ENCODE measurements at regions of chr2 and their contacts with region 1.

Region 1: DNA sequence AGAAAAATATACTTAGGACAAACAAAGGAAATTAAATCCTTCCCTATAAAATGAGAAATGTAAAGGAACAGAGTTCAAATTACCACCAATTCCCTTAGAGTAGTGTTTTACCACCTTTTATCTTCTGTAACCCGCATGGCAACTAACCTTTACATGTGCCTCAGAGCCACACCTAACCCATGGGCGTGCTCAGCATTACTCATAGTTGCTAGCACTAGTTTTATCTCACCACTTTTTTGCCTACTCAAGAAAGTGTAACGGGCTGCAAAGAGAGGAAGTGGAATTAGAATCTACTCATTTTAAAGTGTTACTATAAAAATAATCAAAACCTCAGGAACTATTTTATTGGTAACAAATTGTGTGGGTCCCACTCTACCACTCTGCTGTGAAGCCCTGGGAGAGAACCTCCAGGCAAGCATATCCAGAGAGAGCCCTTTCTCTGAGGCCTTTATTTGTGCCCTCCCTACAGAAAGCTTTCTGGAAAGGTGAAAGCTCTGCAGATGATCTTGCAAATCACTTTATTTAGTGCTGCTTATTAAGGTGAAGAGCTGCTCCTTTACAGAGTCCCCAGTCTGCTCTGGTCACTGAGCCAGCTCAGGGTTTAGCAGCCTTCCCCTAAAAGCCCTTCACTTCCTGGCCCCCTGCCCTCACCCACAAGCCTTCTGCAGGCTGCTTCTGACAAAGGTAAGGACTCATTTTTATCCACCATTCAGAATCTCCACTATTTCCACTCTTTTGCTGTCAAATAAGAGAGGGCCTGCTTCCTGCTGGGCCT is 98.8 kb downstream of the TRABD2A start:
- DNase-seq: peak; percentile 78
- H3K4me3 Mint-ChIP-seq: no peak overlapping the region
- H3K27ac Mint-ChIP-seq: peak overlapping the region; percentile 83
- H3K4me1 Mint-ChIP-seq: peaks cover 68% of the 10 kb centered on the region
- H3K27me3 Mint-ChIP-seq: no peaks in the 10 kb centered on the region

Region 2: GRCh38 chr2:84459018-84459943 is 322.8 kb before region 1 on chr2 and contains the start of gene SUCLG1:
- CTCF ChIA-PET with region 1: no interaction called
- intact Hi-C with region 1: loop called (anchors 2 kb)
- DNase-seq: peak; percentile 89
- H3K4me3 Mint-ChIP-seq: peak within 1 kb of the TSS; percentile 86
- H3K27ac Mint-ChIP-seq: peak within 1 kb of the TSS; percentile 92
- H3K4me1 Mint-ChIP-seq: peaks cover 40% of the 10 kb centered on the region
- H3K27me3 Mint-ChIP-seq: no peaks in the 10 kb centered on the region
- total RNA-seq, gene SUCLG1: 75.3 to 80.7 TPM

Region 3: DNA sequence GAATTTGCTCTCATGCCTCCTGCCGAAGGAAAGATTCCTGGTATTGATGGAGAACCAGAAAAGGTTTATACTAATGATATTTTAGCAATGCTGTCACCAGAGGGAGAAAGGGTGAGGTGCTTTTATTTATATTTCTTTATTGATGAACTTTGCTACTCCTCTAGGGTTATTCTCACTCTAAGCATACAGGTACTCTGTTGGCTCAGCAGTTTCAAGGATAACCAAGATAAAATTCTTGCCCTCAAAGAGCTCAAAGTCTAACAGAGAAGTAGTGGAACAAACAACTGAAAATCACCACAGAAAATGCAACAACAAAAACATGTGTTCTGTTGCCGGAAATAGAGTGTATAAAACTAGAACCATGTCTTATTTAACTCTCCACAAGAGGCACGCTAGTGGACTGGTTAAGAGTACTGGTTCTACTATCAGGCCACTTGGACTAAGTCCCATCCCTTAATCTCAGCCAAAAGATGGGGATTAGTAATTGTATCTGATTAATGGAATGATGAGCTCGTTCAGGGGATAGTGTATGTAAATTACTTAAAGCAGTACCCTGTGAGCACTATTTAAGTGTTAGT is 162.2 kb before region 1 on chr2:
- CTCF ChIA-PET with region 1: no interaction called
- intact Hi-C with region 1: no loop called
- DNase-seq: no peak
- H3K4me3 Mint-ChIP-seq: no peak overlapping the region
- H3K27ac Mint-ChIP-seq: no peak overlapping the region
- H3K4me1 Mint-ChIP-seq: peaks cover 3% of the 10 kb centered on the region
- H3K27me3 Mint-ChIP-seq: no peaks in the 10 kb centered on the region

Region 4: GRCh38 chr2:84649487-84650142 is 132.5 kb before region 1 on chr2:
- CTCF ChIA-PET with region 1: interaction called, 3 read pairs
- intact Hi-C with region 1: loop called (anchors 2 kb)
- DNase-seq: no peak
- H3K4me3 Mint-ChIP-seq: peak overlapping the region; percentile 0
- H3K27ac Mint-ChIP-seq: peak overlapping the region; percentile 60
- H3K4me1 Mint-ChIP-seq: peaks cover 75% of the 10 kb centered on the region
- H3K27me3 Mint-ChIP-seq: no peaks in the 10 kb centered on the region

Region 5: GRCh38 chr2:84669122-84669521 is 113.0 kb before region 1 on chr2:
- CTCF ChIA-PET with region 1: no interaction called
- intact Hi-C with region 1: no loop called
- DNase-seq: no peak
- H3K4me3 Mint-ChIP-seq: no peak overlapping the region
- H3K27ac Mint-ChIP-seq: no peak overlapping the region
- H3K4me1 Mint-ChIP-seq: peaks cover 5% of the 10 kb centered on the region
- H3K27me3 Mint-ChIP-seq: no peaks in the 10 kb centered on the region

Region 6: DNA sequence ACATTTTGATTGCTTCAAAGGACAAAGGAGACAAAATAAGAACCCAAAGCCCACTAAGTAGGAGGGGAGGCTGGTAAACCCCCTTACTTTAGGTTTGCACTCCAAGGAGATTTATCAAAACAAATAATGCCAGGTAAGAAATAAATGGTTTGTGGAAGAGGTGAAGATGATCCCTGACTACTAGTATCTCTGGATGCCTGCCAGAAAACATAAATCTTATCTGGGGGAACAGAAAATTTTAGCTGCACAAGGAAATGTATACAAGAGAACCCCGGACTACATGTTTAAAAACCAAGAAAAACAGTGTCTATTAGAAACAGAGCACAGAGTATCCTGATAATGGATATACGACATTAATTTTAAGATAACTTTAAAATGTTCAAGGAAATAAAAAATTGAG is 15.3 kb before region 1 on chr2:
- CTCF ChIA-PET with region 1: no interaction called
- intact Hi-C with region 1: loop called (anchors 1 kb)
- DNase-seq: no peak
- H3K4me3 Mint-ChIP-seq: no peak overlapping the region
- H3K27ac Mint-ChIP-seq: no peak overlapping the region
- H3K4me1 Mint-ChIP-seq: peaks cover 6% of the 10 kb centered on the region
- H3K27me3 Mint-ChIP-seq: no peaks in the 10 kb centered on the region

Region 7: DNA sequence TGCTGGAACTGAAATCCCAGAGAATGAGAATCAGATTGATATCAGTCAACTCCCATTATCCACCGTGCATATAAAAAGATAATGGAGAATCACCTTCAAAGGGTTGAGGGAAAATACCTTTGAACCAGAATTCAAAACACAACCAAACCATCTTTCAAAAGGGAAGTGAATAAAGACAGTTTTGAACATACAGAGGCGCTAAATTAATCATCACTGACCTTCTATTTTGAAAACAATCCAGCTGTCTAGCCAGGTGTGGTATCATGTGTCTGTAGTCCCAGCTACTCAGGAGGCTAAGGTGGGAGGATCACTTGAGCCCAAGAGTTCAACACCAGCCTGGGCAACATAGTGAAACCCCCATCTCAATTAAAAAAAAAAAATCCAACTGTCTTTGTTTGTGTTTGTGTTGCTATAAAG is 35.1 kb after region 1 on chr2:
- CTCF ChIA-PET with region 1: interaction called, 4 read pairs
- intact Hi-C with region 1: loop called (anchors 1 kb)
- DNase-seq: peak; percentile 35
- H3K4me3 Mint-ChIP-seq: no peak overlapping the region
- H3K27ac Mint-ChIP-seq: peak overlapping the region; percentile 57
- H3K4me1 Mint-ChIP-seq: peaks cover 41% of the 10 kb centered on the region
- H3K27me3 Mint-ChIP-seq: no peaks in the 10 kb centered on the region

Region 8: GRCh38 chr2:84840306-84840705 is 58.2 kb after region 1 on chr2:
- CTCF ChIA-PET with region 1: no interaction called
- intact Hi-C with region 1: loop called (anchors 1 kb)
- DNase-seq: no peak
- H3K4me3 Mint-ChIP-seq: peak overlapping the region; percentile 74
- H3K27ac Mint-ChIP-seq: peak overlapping the region; percentile 80
- H3K4me1 Mint-ChIP-seq: peaks cover 86% of the 10 kb centered on the region
- H3K27me3 Mint-ChIP-seq: no peaks in the 10 kb centered on the region

Measured in activated naive CD4-positive, alpha-beta T cell treated with anti-CD3 and anti-CD28 coated beads for 36 hours (primary cell).